CD8-positive, alpha-beta T cell (primary cell): ENCODE measurements at regions of chr15 and their contacts with region 1.

Region 1: DNA sequence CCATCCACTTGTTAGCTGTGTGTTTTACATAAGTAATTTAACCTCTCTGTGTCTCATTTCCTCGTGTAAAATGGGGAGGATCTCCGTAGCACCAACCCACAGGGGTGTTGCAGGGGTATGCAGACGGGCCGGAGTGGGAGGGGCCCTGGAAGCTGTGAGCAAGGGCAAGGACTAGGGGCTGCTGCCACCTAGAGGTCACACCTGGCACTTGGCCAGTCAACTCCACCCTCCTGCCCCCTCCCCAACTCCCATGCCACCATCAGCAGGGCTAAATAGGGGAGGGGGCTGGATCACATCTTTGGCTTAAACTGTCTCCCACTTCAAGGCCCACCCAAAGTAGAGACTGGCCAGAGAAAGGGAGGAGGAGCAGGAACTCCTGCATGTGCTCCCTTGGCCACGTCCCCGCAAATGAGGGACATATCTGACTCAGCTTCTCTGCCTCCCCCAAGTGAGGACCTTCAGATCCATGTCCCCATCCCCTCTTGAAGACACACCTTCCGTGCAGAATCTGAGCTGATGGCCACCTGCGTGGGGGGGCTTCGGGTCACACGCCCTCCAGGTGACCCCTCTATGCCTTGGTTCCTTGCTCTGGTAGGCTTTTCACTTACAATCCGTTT is 2.6 kb downstream of the CCDC9B start:
- DNase-seq: peak; percentile 54 to 86 (median 79)
- ATAC-seq: peak; percentile 96
- H3K4me3 ChIP-seq: no peak overlapping the region
- H3K4me3 Mint-ChIP-seq: no peak overlapping the region
- H3K27ac ChIP-seq: no peak overlapping the region
- H3K27ac Mint-ChIP-seq: no peak overlapping the region
- H3K4me1 ChIP-seq: peaks cover 17% of the 10 kb centered on the region
- H3K4me1 Mint-ChIP-seq: peaks cover 18% of the 10 kb centered on the region
- H3K27me3 ChIP-seq: no peaks in the 10 kb centered on the region
- H3K27me3 Mint-ChIP-seq: peaks cover 2% of the 10 kb centered on the region
- CTCF ChIP-seq: peak; percentile 82

Region 2: GRCh38 chr15:40217159-40217824 is 120.9 kb before region 1 on chr15:
- CTCF ChIA-PET with region 1: interaction called, 11 read pairs
- POLR2A ChIA-PET with region 1: no interaction called
- intact Hi-C with region 1: loop called in 1 of 2 experiments (anchors 5 kb)
- DNase-seq: peak in 7 of 9 experiments; percentile 21 to 84 (median 36)
- ATAC-seq: peak; percentile 98
- H3K4me3 ChIP-seq: no peak overlapping the region
- H3K4me3 Mint-ChIP-seq: no peak overlapping the region
- H3K27ac ChIP-seq: no peak overlapping the region
- H3K27ac Mint-ChIP-seq: no peak overlapping the region
- H3K4me1 ChIP-seq: no peaks in the 10 kb centered on the region
- H3K4me1 Mint-ChIP-seq: no peaks in the 10 kb centered on the region
- H3K27me3 ChIP-seq: no peaks in the 10 kb centered on the region
- H3K27me3 Mint-ChIP-seq: no peaks in the 10 kb centered on the region
- CTCF ChIP-seq: peak; percentile 81

Region 3: DNA sequence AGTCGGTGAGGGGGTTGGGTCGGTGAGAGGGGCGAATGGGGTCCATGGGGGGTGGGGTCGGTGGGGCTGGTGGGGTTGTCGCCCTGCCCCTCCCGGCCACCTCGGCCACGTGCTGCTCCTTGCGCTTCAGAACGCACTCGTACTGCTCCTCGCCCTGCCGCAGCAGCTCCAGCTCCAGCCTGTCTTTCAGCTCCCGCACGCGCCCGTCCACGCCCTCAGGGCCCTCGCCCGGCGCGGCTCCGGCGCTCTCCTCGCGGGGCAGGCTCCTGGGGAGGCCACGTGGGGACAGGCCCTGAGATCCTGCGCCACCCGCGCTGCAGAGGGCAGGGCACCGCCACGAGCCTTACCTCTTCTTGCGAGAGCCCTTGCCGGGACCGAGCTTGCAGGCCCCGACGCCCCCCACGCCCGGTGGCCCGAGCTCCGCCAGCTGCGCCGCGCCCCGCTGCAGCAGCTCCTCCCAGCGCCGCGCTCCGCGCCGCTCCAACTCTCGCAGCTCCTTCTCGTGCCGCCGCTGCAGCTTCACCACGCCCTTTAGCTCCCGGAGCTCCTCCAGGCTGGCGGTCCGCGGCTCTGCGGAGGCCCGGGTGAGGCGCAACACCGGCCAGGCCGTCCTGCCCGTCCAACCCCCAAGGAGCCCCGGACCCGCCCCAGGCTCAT is 47.1 kb before region 1 on chr15:
- CTCF ChIA-PET with region 1: interaction called, 27 read pairs
- POLR2A ChIA-PET with region 1: no interaction called
- intact Hi-C with region 1: no loop called
- DNase-seq: no peak
- ATAC-seq: no peak
- H3K4me3 ChIP-seq: no peak overlapping the region
- H3K4me3 Mint-ChIP-seq: no peak overlapping the region
- H3K27ac ChIP-seq: no peak overlapping the region
- H3K27ac Mint-ChIP-seq: no peak overlapping the region
- H3K4me1 ChIP-seq: no peaks in the 10 kb centered on the region
- H3K4me1 Mint-ChIP-seq: no peaks in the 10 kb centered on the region
- H3K27me3 ChIP-seq: no peaks in the 10 kb centered on the region
- H3K27me3 Mint-ChIP-seq: no peaks in the 10 kb centered on the region
- CTCF ChIP-seq: no peak

Region 4: DNA sequence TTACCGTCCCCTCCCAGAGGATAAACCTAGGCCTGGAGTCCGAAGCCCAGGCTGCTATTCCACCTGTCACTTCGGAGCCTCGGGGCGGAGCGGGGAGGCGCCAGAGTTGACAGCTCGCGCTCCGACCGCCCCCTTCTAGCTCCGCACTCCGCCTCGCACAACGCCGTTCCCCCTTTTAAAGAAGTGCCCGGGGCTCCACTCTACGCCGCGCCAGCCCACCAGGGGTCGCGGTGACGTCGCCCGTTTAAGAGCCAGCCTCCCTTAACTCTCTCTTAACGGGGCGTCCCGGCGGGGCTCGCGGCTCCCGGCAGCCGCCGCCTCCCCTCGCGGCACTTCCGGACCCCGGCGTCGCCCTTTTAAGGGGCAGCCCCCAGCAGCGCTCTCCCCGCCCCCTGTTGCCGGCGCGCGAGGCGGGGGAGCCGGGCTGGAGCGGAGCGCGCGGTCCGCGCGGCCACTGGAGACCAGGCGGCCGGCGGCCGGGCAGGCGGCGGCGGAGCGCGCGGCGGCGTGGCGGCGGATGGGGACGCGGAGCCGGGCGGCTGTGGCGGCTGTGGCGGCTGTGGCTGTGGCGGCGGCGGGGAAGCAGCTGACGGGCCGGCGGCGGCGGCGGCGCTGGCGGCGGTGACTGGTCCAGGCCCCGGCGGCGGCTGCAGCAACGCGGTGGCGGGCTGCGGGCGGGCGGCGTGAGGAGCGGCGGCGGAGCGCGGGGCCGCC is 14.8 kb before region 1 on chr15 and contains the start of gene INAFM2:
- CTCF ChIA-PET with region 1: interaction called, 421 read pairs
- POLR2A ChIA-PET with region 1: interaction called, 6 read pairs
- intact Hi-C with region 1: loop called (anchors 1 kb)
- DNase-seq: peak; percentile 79 to 97 (median 93)
- ATAC-seq: peak; percentile 90
- H3K4me3 ChIP-seq: peak within 1 kb of the TSS; percentile 34 to 45
- H3K4me3 Mint-ChIP-seq: peak within 1 kb of the TSS; percentile 80
- H3K27ac ChIP-seq: peak within 1 kb of the TSS in 1 of 2 experiments; percentile 47
- H3K27ac Mint-ChIP-seq: peak within 1 kb of the TSS; percentile 74
- H3K4me1 ChIP-seq: peaks cover 21% of the 10 kb centered on the region
- H3K4me1 Mint-ChIP-seq: peaks cover 22% of the 10 kb centered on the region
- H3K27me3 ChIP-seq: no peaks in the 10 kb centered on the region
- H3K27me3 Mint-ChIP-seq: no peaks in the 10 kb centered on the region
- CTCF ChIP-seq: peak; percentile 60
- total RNA-seq, gene INAFM2: 4.3 to 8.1 TPM

Region 5: GRCh38 chr15:40367686-40368611 is 29.8 kb after region 1 on chr15:
- CTCF ChIA-PET with region 1: interaction called, 126 read pairs
- POLR2A ChIA-PET with region 1: no interaction called
- intact Hi-C with region 1: no loop called
- DNase-seq: peak; percentile 74 to 96 (median 85)
- ATAC-seq: peak; percentile 95
- H3K4me3 ChIP-seq: peak overlapping the region; percentile 58 to 75
- H3K4me3 Mint-ChIP-seq: peak overlapping the region; percentile 83
- H3K27ac ChIP-seq: peak overlapping the region; percentile 17 to 62
- H3K27ac Mint-ChIP-seq: peak overlapping the region; percentile 84
- H3K4me1 ChIP-seq: peaks cover 23% of the 10 kb centered on the region
- H3K4me1 Mint-ChIP-seq: peaks cover 19% of the 10 kb centered on the region
- H3K27me3 ChIP-seq: no peaks in the 10 kb centered on the region
- H3K27me3 Mint-ChIP-seq: no peaks in the 10 kb centered on the region
- CTCF ChIP-seq: peak; percentile 92

Region 6: GRCh38 chr15:40421246-40422157 is 83.4 kb after region 1 on chr15:
- CTCF ChIA-PET with region 1: interaction called, 290 read pairs
- POLR2A ChIA-PET with region 1: no interaction called
- intact Hi-C with region 1: no loop called
- DNase-seq: peak; percentile 65 to 89 (median 80)
- ATAC-seq: peak; percentile 99
- H3K4me3 ChIP-seq: no peak overlapping the region
- H3K4me3 Mint-ChIP-seq: no peak overlapping the region
- H3K27ac ChIP-seq: no peak overlapping the region
- H3K27ac Mint-ChIP-seq: no peak overlapping the region
- H3K4me1 ChIP-seq: peaks cover 6% of the 10 kb centered on the region
- H3K4me1 Mint-ChIP-seq: no peaks in the 10 kb centered on the region
- H3K27me3 ChIP-seq: no peaks in the 10 kb centered on the region
- H3K27me3 Mint-ChIP-seq: no peaks in the 10 kb centered on the region
- CTCF ChIP-seq: peak; percentile 80